Activated B cell treated with CpG ODN at 0.5 μM for 24 hours (primary cell): ENCODE measurements at regions of chr19 and their contacts with region 1.

Region 1: GRCh38 chr19:41706741-41707501 is 1.5 kb upstream of the CEACAM5 start:
- DNase-seq: peak; percentile 60
- ATAC-seq: peak; percentile 88
- H3K4me3 Mint-ChIP-seq: peak overlapping the region; percentile 76
- H3K27ac Mint-ChIP-seq: no peak overlapping the region
- H3K4me1 Mint-ChIP-seq: peaks cover 4% of the 10 kb centered on the region
- H3K27me3 Mint-ChIP-seq: peaks cover 45% of the 10 kb centered on the region
- CTCF ChIP-seq: peak; percentile 99

Region 2: GRCh38 chr19:41531438-41532311 is 175.2 kb before region 1 on chr19:
- CTCF ChIA-PET with region 1: no interaction called
- POLR2A ChIA-PET with region 1: no interaction called
- intact Hi-C with region 1: no loop called
- DNase-seq: peak; percentile 64
- ATAC-seq: peak; percentile 78
- H3K4me3 Mint-ChIP-seq: peak overlapping the region; percentile 76
- H3K27ac Mint-ChIP-seq: peak overlapping the region; percentile 86
- H3K4me1 Mint-ChIP-seq: peaks cover 84% of the 10 kb centered on the region
- H3K27me3 Mint-ChIP-seq: no peaks in the 10 kb centered on the region
- CTCF ChIP-seq: no peak

Region 3: DNA sequence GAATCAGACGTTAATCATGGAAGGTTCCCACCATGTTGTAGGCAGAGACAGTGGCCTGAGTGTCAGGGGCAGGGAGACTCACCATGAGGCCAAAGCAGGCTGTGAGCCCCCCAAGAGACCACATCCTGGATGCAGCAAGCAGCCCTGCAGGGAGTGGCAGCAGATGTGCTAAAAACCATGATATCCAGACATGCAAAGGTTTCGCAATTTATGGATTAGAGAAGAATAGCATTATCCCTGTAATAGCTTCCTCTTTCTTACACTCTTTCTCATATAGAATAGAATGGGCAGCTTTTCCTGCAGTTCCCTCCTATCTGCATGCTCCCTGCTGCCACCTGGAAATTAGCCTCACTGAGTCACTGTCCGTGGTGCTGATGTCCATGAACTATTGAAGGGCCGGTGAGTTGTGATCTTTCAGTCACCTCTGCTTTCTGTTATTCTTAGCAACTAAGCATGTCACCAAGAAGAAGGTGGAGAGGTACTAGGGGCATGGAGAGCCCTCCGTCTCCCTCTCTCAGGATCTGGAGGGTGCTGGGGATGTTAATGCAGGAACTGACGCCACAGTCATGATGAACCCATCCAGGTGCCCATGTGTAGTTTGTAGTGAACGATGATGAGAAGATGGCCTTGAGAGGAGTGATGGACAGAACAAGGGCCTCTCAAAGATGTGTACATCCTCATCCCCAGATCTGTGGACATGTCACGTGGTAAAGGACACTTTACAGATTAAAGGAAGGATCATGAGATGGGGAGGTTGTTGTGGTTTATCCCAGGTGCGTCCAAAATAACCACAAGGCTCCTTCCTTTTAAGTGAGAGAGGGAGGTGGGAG is 89.9 kb before region 1 on chr19:
- CTCF ChIA-PET with region 1: no interaction called
- POLR2A ChIA-PET with region 1: no interaction called
- intact Hi-C with region 1: no loop called
- DNase-seq: no peak
- ATAC-seq: no peak
- H3K4me3 Mint-ChIP-seq: no peak overlapping the region
- H3K27ac Mint-ChIP-seq: no peak overlapping the region
- H3K4me1 Mint-ChIP-seq: no peaks in the 10 kb centered on the region
- H3K27me3 Mint-ChIP-seq: peaks cover 25% of the 10 kb centered on the region
- CTCF ChIP-seq: no peak

Region 4: DNA sequence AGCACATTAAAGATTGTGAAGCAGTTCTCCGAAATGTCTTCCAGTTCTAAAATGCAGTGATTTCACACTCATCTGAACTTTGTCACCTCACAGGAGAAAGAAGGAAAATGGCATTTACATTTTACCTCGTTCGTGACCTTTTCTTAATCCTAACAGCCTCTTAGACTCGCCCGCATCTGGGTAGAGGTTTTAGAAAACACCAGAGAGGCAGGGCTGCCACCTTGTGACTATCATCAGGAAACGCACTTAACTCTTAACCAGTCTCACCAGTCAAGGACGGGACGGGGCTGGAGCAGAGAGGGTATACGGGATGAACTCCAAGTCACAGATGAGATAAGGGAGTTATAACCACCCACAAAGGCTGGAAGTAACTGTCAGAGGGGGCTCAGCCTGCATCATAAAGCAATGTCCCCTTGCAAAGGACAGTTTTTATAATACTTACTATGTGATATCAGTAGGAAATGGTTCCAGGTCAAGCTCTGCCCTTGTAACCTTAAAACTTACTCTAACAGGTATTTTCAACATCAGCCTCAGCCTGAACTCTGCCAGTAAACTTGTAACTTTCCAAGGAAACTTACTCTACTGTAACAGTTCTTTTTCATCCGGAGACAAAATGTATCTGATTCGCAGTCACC is 39.8 kb after region 1 on chr19:
- CTCF ChIA-PET with region 1: interaction called, 4 read pairs
- POLR2A ChIA-PET with region 1: no interaction called
- intact Hi-C with region 1: loop called (anchors 1 kb)
- DNase-seq: no peak
- ATAC-seq: peak; percentile 47
- H3K4me3 Mint-ChIP-seq: no peak overlapping the region
- H3K27ac Mint-ChIP-seq: no peak overlapping the region
- H3K4me1 Mint-ChIP-seq: peaks cover 17% of the 10 kb centered on the region
- H3K27me3 Mint-ChIP-seq: peaks cover 35% of the 10 kb centered on the region
- CTCF ChIP-seq: no peak